ENCODE measurements at regions of chr10 and their contacts with region 1.

Region 1: GRCh38 chr10:6580279-6581029 is 378 bp upstream of the PRKCQ start:
- DNase-seq: peak; percentile 80
- H3K4me3 Mint-ChIP-seq: peak overlapping the region; percentile 98
- H3K27ac Mint-ChIP-seq: peak overlapping the region; percentile 99
- H3K4me1 Mint-ChIP-seq: peaks cover 77% of the 10 kb centered on the region
- H3K27me3 Mint-ChIP-seq: no peaks in the 10 kb centered on the region

Region 2: DNA sequence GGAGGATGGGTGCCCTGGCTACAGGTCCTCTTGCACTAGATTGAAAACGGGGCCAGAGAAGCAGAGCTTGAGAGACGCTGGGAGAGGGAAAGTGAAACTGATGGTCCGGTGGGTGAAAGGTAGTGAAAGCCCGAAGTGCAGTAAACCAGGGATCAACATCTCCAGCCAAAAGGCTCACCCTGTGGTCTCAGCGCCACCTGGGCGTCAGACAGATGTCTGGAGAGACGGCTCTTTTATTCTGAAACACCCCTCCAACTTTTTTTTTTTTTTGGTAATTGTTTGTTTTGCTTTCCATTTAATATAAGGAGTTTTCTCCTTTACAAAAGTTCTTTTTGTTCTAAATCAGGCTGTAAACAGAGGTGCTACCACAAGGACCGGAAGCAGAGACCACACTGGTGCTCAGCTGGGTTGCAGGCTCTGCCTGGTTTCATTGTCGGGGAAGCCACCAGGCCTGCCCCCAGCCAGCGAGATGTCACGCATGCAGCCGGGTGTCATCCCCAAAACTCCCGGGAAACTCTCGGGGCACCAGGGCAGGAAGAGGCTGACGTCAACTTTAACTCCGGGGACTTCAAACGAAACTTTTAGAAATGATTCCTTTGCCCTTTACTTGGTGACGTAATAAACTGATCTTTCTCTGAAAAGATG is 529.5 kb before region 1 on chr10:
- intact Hi-C with region 1: loop called (anchors 5 kb)
- DNase-seq: peak; percentile 92
- H3K4me3 Mint-ChIP-seq: peak overlapping the region; percentile 82
- H3K27ac Mint-ChIP-seq: peak overlapping the region; percentile 91
- H3K4me1 Mint-ChIP-seq: peaks cover 89% of the 10 kb centered on the region
- H3K27me3 Mint-ChIP-seq: no peaks in the 10 kb centered on the region

Region 3: GRCh38 chr10:6348096-6348874 is 232.2 kb before region 1 on chr10:
- intact Hi-C with region 1: no loop called
- DNase-seq: peak; percentile 62
- H3K4me3 Mint-ChIP-seq: peak overlapping the region; percentile 74
- H3K27ac Mint-ChIP-seq: peak overlapping the region; percentile 96
- H3K4me1 Mint-ChIP-seq: peaks cover 50% of the 10 kb centered on the region
- H3K27me3 Mint-ChIP-seq: no peaks in the 10 kb centered on the region

Region 4: DNA sequence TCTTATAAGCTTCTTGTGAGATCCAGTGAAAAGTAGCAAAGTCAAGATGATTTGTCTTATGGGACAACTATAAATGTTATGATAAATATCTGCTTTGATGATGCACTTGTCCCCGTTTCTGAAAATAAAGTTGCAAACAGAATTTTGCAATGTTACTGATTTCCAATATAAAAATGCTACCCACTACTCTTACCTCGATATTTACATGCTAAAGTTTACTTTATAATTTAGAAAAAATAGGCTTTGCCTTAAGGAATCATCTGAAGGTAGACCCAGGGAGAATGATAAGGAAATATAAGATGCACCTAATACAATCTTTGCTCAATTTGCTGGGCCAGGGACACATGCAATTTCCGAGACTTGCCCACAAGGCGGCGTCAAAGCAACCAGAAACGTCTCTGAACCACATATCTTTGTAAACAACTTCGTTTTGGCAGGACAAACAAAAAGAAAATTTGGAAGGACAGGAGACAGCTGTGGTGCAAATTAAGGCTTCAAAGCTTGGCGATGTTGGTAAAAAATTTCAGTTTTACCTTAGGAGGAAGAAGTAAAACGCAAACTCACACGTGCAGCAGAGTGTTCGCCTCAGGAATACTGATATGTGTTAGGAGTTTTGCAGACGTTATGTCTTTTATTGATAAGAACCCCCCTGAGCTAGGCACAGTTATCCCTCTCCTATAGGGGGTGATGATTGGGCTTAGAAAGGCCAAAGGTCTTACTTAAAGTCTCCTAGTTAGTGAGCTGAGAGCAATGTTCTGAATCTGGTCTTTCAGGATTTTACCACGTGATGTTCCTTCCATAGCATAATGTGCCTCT is 134.7 kb before region 1 on chr10:
- intact Hi-C with region 1: loop called (anchors 1 kb)
- DNase-seq: peak; percentile 30
- H3K4me3 Mint-ChIP-seq: no peak overlapping the region
- H3K27ac Mint-ChIP-seq: peak overlapping the region; percentile 36
- H3K4me1 Mint-ChIP-seq: peaks cover 34% of the 10 kb centered on the region
- H3K27me3 Mint-ChIP-seq: no peaks in the 10 kb centered on the region

Region 5: GRCh38 chr10:6507311-6507710 is 73.1 kb before region 1 on chr10:
- intact Hi-C with region 1: loop called (anchors 1 kb)
- DNase-seq: peak; percentile 57
- H3K4me3 Mint-ChIP-seq: peak overlapping the region; percentile 60
- H3K27ac Mint-ChIP-seq: peak overlapping the region; percentile 88
- H3K4me1 Mint-ChIP-seq: peaks cover 73% of the 10 kb centered on the region
- H3K27me3 Mint-ChIP-seq: no peaks in the 10 kb centered on the region

Region 6: DNA sequence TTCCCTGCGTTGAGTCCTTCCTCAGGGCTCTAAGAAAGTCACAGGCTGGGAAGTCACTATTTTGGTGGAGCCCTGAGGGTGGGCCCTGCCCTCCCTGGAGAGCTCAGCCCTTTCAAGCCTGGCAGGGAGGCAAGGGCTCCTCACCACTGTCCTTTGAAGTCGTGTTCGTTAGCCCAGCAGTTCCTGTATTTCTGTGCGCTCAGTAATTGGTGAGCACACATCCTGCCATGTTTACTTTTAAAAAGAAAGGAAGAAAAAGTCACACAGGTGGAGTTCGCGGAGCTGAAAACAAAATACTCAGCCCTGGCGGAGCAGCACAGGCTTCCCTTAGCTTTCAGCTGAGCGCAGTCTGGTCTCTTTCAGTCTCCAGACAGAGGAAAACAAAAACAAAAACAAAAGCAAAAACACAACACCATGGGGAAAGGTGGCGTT is 37.4 kb before region 1 on chr10:
- intact Hi-C with region 1: loop called (anchors 1 kb)
- DNase-seq: peak; percentile 64
- H3K4me3 Mint-ChIP-seq: peak overlapping the region; percentile 86
- H3K27ac Mint-ChIP-seq: peak overlapping the region; percentile 99
- H3K4me1 Mint-ChIP-seq: peaks cover 74% of the 10 kb centered on the region
- H3K27me3 Mint-ChIP-seq: no peaks in the 10 kb centered on the region

Region 7: DNA sequence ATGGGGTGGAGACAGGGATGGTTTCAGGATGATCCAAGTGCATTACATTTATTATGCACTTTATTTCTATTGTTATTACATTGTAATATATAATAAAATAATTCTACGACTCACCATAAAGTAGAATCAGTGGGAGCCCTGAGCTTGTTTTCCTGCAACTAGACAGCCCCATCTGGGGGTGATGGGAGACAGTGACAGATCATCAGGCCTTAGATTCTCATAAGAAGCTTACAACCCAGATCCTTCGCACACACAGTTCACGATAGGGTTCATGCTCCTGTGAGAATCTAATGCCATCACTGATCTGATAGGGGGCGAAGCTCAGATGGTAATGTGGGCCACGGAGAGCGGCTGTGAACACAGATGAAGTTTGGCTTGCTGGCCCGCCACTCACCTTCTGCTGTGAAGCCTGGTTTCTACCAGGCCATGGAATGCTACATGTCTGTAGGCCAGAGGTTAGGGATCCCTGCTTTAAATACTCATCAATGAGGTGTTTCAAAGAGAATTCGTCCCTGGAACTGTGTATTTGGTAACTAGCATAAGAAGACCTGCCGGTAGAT is 20.9 kb after region 1 on chr10:
- intact Hi-C with region 1: loop called (anchors 2 kb)
- DNase-seq: no peak
- H3K4me3 Mint-ChIP-seq: peak overlapping the region; percentile 25
- H3K27ac Mint-ChIP-seq: peak overlapping the region; percentile 68
- H3K4me1 Mint-ChIP-seq: peaks cover 92% of the 10 kb centered on the region
- H3K27me3 Mint-ChIP-seq: no peaks in the 10 kb centered on the region

Region 8: DNA sequence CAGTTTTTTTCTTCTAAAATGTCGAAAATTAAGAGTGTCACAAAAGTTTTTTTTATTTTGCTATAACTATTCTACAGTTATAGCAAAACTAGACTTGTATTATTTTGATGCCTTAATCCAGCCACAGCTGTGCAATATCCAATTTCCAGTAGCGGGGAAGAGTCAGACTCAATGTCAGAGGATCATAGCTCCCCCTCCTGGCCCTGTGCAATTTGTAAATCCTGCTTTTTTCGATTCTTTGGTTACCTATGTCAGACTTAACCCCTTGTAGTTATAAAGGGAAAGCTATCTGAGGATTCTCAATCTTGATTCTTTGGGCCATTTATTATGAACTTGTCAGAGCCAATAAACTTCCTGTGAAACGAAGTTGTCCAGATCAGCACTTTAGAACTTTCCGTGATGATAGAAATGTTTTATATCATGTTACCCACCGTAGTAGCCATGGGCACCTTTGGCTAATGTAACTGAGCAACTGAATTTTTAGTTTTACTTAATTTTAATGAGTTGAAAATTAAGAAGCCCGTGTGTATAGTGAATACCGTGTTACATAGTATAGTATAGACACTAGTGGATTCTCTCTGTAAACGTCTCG is 87.3 kb after region 1 on chr10:
- intact Hi-C with region 1: loop called (anchors 1 kb)
- DNase-seq: peak; percentile 26
- H3K4me3 Mint-ChIP-seq: no peak overlapping the region
- H3K27ac Mint-ChIP-seq: no peak overlapping the region
- H3K4me1 Mint-ChIP-seq: peaks cover 36% of the 10 kb centered on the region
- H3K27me3 Mint-ChIP-seq: peaks cover 20% of the 10 kb centered on the region